Activated CD4-positive, alpha-beta memory T cell treated with anti-CD3 and anti-CD28 coated beads, Interleukin-2, amount 10 ng/mL, durations not matched to agents 7 days and 5 days (primary cell): ENCODE measurements at regions of chr9 and their contacts with region 1.

Region 1: GRCh38 chr9:93108291-93109041 is 12.4 kb downstream of the CARD19 start:
- DNase-seq: peak; percentile 68
- H3K4me3 Mint-ChIP-seq: peak overlapping the region; percentile 32
- H3K27ac Mint-ChIP-seq: peak overlapping the region; percentile 61
- H3K4me1 Mint-ChIP-seq: peaks cover 65% of the 10 kb centered on the region
- H3K27me3 Mint-ChIP-seq: no peaks in the 10 kb centered on the region

Region 2: DNA sequence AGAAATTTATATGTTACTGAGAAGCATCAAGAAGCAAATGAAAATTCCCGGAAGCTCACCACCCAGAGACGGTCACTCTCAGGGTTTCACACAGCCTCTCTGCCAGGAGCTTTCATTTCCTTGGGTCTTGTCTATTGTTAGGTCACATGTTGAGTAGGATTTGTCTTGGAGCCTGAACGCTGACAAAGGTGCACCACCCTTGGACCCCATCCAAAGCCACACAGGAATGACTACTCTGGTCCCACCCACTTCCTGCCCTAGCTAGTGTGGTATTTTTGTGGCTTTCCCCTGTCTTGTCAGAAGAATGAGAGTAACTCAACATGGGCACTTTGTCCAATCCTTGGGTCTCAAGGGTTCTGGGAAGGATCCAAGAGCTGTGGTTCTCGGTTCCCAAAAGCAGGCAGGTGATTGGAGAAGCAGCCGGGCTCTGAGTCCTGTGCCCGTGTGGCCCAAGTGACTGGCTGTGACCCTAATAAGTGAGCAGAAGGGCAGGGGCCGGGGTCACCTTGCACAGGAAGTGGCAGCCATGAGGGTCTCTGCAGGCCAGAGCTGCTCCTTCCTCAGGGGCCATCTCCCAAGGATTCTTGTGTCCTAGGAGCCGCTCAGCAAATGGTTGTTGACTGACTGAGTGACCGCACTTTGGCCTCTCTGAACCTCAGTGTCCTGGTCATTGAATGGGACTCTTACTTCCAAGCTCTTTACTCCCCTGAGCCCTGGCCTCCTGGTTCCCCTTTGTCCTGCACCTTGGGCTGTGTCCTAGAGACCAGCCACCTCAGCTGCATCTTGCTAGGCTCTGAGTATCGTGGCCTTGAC is 154.2 kb before region 1 on chr9:
- CTCF ChIA-PET with region 1: interaction called, 12 read pairs
- POLR2A ChIA-PET with region 1: interaction called, 3 read pairs
- DNase-seq: peak; percentile 88
- H3K4me3 Mint-ChIP-seq: peak overlapping the region; percentile 63
- H3K27ac Mint-ChIP-seq: peak overlapping the region; percentile 91
- H3K4me1 Mint-ChIP-seq: peaks cover 71% of the 10 kb centered on the region
- H3K27me3 Mint-ChIP-seq: no peaks in the 10 kb centered on the region

Region 3: GRCh38 chr9:93028448-93029006 is 79.9 kb before region 1 on chr9:
- CTCF ChIA-PET with region 1: interaction called, 15 read pairs
- POLR2A ChIA-PET with region 1: interaction called, 3 read pairs
- DNase-seq: peak; percentile 74
- H3K4me3 Mint-ChIP-seq: peak overlapping the region; percentile 72
- H3K27ac Mint-ChIP-seq: peak overlapping the region; percentile 90
- H3K4me1 Mint-ChIP-seq: peaks cover 68% of the 10 kb centered on the region
- H3K27me3 Mint-ChIP-seq: no peaks in the 10 kb centered on the region

Region 4: DNA sequence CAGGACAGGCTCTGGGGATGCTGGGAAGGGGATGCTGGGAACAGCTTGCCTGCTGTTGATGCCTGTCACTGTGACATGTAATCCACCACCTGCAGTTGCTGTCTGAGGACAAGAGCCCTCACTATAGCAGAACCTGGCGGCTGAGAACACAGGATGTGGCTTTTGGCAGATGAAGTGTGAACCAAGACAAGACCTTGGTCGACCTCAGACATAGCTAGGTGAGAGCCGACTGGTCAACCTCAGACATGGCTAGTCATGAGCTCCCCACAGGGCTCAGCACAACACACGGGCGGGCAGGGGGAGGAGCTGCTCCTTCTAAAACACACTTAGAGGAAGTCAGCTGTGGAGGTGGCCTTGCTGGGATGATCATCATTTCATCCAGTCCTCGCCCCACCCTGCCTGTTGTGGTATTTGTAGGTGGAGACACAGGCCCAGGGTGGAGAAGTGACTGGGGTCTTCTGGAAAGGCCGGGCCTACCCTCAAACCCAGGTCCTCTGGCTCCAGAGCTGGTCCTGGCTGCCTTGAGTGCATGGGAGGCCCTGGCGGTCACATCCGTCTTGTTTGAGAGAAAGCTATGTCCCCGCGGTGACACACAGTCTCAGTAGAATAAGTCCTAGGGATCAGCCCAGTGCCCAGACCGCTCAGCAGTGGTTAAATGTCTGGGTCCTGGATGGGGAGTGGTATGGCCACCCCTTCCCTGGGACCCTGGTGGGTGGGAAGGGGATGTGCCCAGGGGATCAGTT is 43.9 kb before region 1 on chr9:
- CTCF ChIA-PET with region 1: interaction called, 20 read pairs
- POLR2A ChIA-PET with region 1: interaction called, 13 read pairs
- DNase-seq: peak; percentile 95
- H3K4me3 Mint-ChIP-seq: peak overlapping the region; percentile 74
- H3K27ac Mint-ChIP-seq: peak overlapping the region; percentile 94
- H3K4me1 Mint-ChIP-seq: peaks cover 77% of the 10 kb centered on the region
- H3K27me3 Mint-ChIP-seq: no peaks in the 10 kb centered on the region

Region 5: GRCh38 chr9:93119953-93120845 is 11.7 kb after region 1 on chr9:
- CTCF ChIA-PET with region 1: interaction called, 30 read pairs
- POLR2A ChIA-PET with region 1: interaction called, 5 read pairs
- DNase-seq: peak; percentile 55
- H3K4me3 Mint-ChIP-seq: no peak overlapping the region
- H3K27ac Mint-ChIP-seq: peak overlapping the region; percentile 68
- H3K4me1 Mint-ChIP-seq: peaks cover 16% of the 10 kb centered on the region
- H3K27me3 Mint-ChIP-seq: no peaks in the 10 kb centered on the region

Region 6: GRCh38 chr9:93134015-93134739 is 25.7 kb after region 1 on chr9 and contains the start of gene NINJ1:
- CTCF ChIA-PET with region 1: interaction called, 12 read pairs
- POLR2A ChIA-PET with region 1: interaction called, 5 read pairs
- DNase-seq: peak; percentile 77
- H3K4me3 Mint-ChIP-seq: peak within 1 kb of the TSS; percentile 84
- H3K27ac Mint-ChIP-seq: peak within 1 kb of the TSS; percentile 73
- H3K4me1 Mint-ChIP-seq: peaks cover 54% of the 10 kb centered on the region
- H3K27me3 Mint-ChIP-seq: no peaks in the 10 kb centered on the region
- total RNA-seq, gene NINJ1: 36.9 to 37.4 TPM

Region 7: GRCh38 chr9:93302551-93303257 is 194.2 kb after region 1 on chr9:
- CTCF ChIA-PET with region 1: interaction called, 13 read pairs
- POLR2A ChIA-PET with region 1: interaction called, 4 read pairs
- DNase-seq: peak; percentile 61
- H3K4me3 Mint-ChIP-seq: no peak overlapping the region
- H3K27ac Mint-ChIP-seq: no peak overlapping the region
- H3K4me1 Mint-ChIP-seq: peaks cover 9% of the 10 kb centered on the region
- H3K27me3 Mint-ChIP-seq: peaks cover 2% of the 10 kb centered on the region

Region 8: GRCh38 chr9:93365427-93366118 is 257.1 kb after region 1 on chr9:
- CTCF ChIA-PET with region 1: no interaction called
- POLR2A ChIA-PET with region 1: no interaction called
- DNase-seq: no peak
- H3K4me3 Mint-ChIP-seq: no peak overlapping the region
- H3K27ac Mint-ChIP-seq: no peak overlapping the region
- H3K4me1 Mint-ChIP-seq: no peaks in the 10 kb centered on the region
- H3K27me3 Mint-ChIP-seq: peaks cover 14% of the 10 kb centered on the region